Transverse colon (tissue), 4 donors: ENCODE measurements at regions of chr10 and their contacts with region 1.

Region 1: GRCh38 chr10:21372651-21373410 is 152.7 kb downstream of the SKIDA1 start:
- DNase-seq: peak; percentile 58
- H3K4me3 ChIP-seq: no peak overlapping the region
- H3K27ac ChIP-seq: peak overlapping the region in 2 of 4 donors; percentile 5 to 50
- H3K4me1 ChIP-seq: peaks cover 0 to 10% (median 5%) of the 10 kb centered on the region in 4 donors
- H3K27me3 ChIP-seq: no peaks in the 10 kb centered on the region
- CTCF ChIP-seq: no peak
- EP300 ChIP-seq: no peak
- POLR2A ChIP-seq: no peak

Region 2: GRCh38 chr10:21427804-21428481 is 55.1 kb after region 1 on chr10:
- in situ Hi-C with region 1: no loop called
- intact Hi-C with region 1: loop called (anchors 2 kb)
- DNase-seq: no peak
- H3K4me3 ChIP-seq: no peak overlapping the region
- H3K27ac ChIP-seq: no peak overlapping the region
- H3K4me1 ChIP-seq: no peaks in the 10 kb centered on the region
- H3K27me3 ChIP-seq: no peaks in the 10 kb centered on the region
- CTCF ChIP-seq: no peak
- EP300 ChIP-seq: no peak
- POLR2A ChIP-seq: no peak